ENCODE measurements at regions of chr9 and their contacts with region 1.

Region 1: GRCh38 chr9:86766912-86767311 is 180.4 kb downstream of the GAS1 start:
- DNase-seq: peak; percentile 98
- H3K4me3 ChIP-seq: no peak overlapping the region
- H3K27ac ChIP-seq: peak overlapping the region; percentile 73
- H3K4me1 ChIP-seq: peaks cover 21% of the 10 kb centered on the region
- H3K27me3 ChIP-seq: no peaks in the 10 kb centered on the region
- CTCF ChIP-seq: no peak

Region 2: GRCh38 chr9:86405926-86406325 is 361.0 kb before region 1 on chr9:
- CTCF ChIA-PET with region 1: no interaction called
- dilution Hi-C with region 1: no loop called
- in situ Hi-C with region 1: no loop called
- intact Hi-C with region 1: loop called (anchors 10 kb)
- DNase-seq: peak; percentile 96
- H3K4me3 ChIP-seq: peak overlapping the region; percentile 4 to 15 (median 14)
- H3K27ac ChIP-seq: peak overlapping the region; percentile 93
- H3K4me1 ChIP-seq: peaks cover 34% of the 10 kb centered on the region
- H3K27me3 ChIP-seq: no peaks in the 10 kb centered on the region
- CTCF ChIP-seq: no peak

Region 3: GRCh38 chr9:86573886-86574285 is 193.0 kb before region 1 on chr9:
- CTCF ChIA-PET with region 1: no interaction called
- dilution Hi-C with region 1: no loop called
- in situ Hi-C with region 1: no loop called
- intact Hi-C with region 1: no loop called
- DNase-seq: no peak
- H3K4me3 ChIP-seq: no peak overlapping the region
- H3K27ac ChIP-seq: no peak overlapping the region
- H3K4me1 ChIP-seq: no peaks in the 10 kb centered on the region
- H3K27me3 ChIP-seq: no peaks in the 10 kb centered on the region
- CTCF ChIP-seq: no peak

Region 4: DNA sequence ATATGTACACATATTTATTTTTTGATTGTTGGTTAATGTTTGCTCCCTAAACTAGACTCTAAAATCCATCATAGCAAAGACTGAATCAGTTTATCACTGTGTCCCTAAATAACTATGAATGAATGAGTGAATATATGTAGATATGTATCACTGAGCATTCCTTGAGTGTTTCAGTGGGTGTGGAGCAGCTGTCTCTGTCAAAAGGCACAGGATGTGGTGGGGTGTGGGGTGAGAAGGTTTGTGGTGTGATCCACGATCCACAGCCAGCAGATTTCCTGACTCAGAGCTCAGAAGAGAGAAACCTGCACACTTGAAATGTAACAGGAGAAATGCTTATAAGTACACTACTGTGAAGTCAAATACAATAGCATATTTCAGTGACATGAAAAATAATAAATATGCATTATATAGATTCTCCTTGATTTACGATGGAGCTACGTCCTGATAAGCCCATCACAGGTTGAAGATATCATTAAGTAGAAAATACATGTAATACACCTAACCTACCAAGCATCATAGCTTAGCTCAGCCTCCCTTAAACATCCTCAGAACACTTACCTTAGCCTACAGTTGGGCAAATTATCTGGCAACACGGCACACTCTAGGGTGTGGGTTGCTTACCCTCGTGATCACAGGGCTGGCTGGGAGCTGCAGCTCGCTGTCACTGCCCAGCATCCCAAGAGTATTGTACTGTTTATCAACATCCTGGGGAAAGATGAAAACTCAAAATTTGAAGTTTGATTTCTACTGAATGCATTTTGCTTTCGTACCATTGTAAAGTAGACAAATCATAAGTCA is 106.6 kb before region 1 on chr9:
- CTCF ChIA-PET with region 1: no interaction called
- dilution Hi-C with region 1: no loop called
- in situ Hi-C with region 1: no loop called
- intact Hi-C with region 1: loop called (anchors 10 kb)
- DNase-seq: peak; percentile 78
- H3K4me3 ChIP-seq: no peak overlapping the region
- H3K27ac ChIP-seq: no peak overlapping the region
- H3K4me1 ChIP-seq: peaks cover 19% of the 10 kb centered on the region
- H3K27me3 ChIP-seq: no peaks in the 10 kb centered on the region
- CTCF ChIP-seq: no peak

Region 5: GRCh38 chr9:86721843-86722711 is 44.8 kb before region 1 on chr9:
- CTCF ChIA-PET with region 1: no interaction called
- dilution Hi-C with region 1: no loop called
- in situ Hi-C with region 1: no loop called
- intact Hi-C with region 1: loop called (anchors 5 kb)
- DNase-seq: peak; percentile 72
- H3K4me3 ChIP-seq: peak overlapping the region in 1 of 3 experiments; percentile 5
- H3K27ac ChIP-seq: peak overlapping the region; percentile 55
- H3K4me1 ChIP-seq: peaks cover 31% of the 10 kb centered on the region
- H3K27me3 ChIP-seq: no peaks in the 10 kb centered on the region
- CTCF ChIP-seq: no peak

Region 6: GRCh38 chr9:87059772-87060171 is 292.9 kb after region 1 on chr9:
- CTCF ChIA-PET with region 1: no interaction called
- dilution Hi-C with region 1: no loop called
- in situ Hi-C with region 1: no loop called
- intact Hi-C with region 1: no loop called
- DNase-seq: no peak
- H3K4me3 ChIP-seq: no peak overlapping the region
- H3K27ac ChIP-seq: no peak overlapping the region
- H3K4me1 ChIP-seq: peaks cover 22% of the 10 kb centered on the region
- H3K27me3 ChIP-seq: no peaks in the 10 kb centered on the region
- CTCF ChIP-seq: no peak

Measured in mammary epithelial cell (primary cell).